ENCODE measurements at regions of chr3 and their contacts with region 1.

Region 1: GRCh38 chr3:5442106-5442785 is 254.7 kb downstream of the EDEM1 start:
- DNase-seq: peak; percentile 30 to 67 (median 50)
- ATAC-seq: peak; percentile 72
- H3K4me3 ChIP-seq: no peak overlapping the region
- H3K27ac ChIP-seq: peak overlapping the region; percentile 72; the same call in 2 of the 3 replicates
- H3K4me1 ChIP-seq: peaks cover 0 to 34% of the 10 kb centered on the region in 2 experiments; a peak in 4 of 5 replicates
- H3K27me3 ChIP-seq: no peaks in the 10 kb centered on the region
- CTCF ChIP-seq: no peak
- EP300 ChIP-seq: peak; percentile 84
- POLR2A ChIP-seq: no peak
- RAD21 ChIP-seq: 0 out of 4 replicates have a peak, but pooled peaks of 1 of the 2 experiments have one; percentile 11

Region 2: GRCh38 chr3:5476403-5476802 is 34.2 kb after region 1 on chr3:
- CTCF ChIA-PET with region 1: no interaction called
- POLR2A ChIA-PET with region 1: no interaction called
- in situ Hi-C with region 1: no loop called
- intact Hi-C with region 1: loop called (anchors 1 kb)
- DNase-seq: peak in 3 of 4 experiments; percentile 16 to 24 (median 21)
- ATAC-seq: peak; percentile 83
- H3K4me3 ChIP-seq: no peak overlapping the region
- H3K27ac ChIP-seq: no peak overlapping the region
- H3K4me1 ChIP-seq: peaks cover 0 to 11% of the 10 kb centered on the region in 2 experiments; a peak in 3 of 5 replicates
- H3K27me3 ChIP-seq: no peaks in the 10 kb centered on the region
- CTCF ChIP-seq: peak; percentile 28 to 44 (median 41); a peak in 5 of 6 replicates
- EP300 ChIP-seq: no peak
- POLR2A ChIP-seq: no peak
- RAD21 ChIP-seq: no peak

Region 3: DNA sequence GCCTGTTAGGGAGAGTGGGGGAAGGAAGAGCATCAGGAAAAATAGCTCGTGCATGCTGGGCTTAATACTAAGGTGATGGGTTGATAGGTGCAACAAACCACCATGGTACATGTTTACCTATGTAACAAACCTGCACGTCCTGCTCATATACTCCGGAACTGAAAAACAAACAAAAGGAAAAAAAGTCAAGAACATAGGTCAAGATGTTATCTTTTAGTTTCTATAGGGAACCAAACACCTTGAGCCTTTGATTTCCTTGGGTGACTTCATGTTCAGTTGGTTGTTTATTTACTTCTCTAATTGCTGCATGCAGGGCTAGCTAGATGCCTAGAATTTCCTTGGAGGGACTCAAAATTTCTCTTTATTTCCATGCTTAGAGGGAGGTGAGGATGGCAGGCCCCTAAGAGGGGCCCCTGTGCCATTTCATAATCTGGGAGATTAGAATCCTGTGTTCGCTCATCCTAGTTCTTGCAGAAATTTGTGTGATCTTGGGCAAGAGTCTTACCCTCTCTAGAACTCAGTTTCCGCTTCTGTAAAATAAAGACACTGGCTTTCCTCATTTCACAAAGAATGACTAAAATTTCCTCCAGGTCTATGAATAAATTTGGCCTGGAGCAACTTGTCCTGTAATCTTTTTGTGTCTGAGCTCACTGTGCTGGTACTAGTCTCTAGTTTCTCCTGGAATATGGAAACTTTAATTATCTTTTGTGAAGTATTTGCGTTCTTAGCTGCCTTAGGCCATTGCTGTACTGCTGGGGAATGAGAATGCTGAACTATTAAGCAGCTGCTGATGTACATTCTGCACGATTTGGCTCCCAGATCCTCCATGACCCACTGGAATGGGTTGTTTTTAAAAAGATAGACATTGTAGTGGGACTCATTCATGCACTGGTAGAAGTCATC is 202.8 kb after region 1 on chr3:
- CTCF ChIA-PET with region 1: no interaction called
- POLR2A ChIA-PET with region 1: no interaction called
- in situ Hi-C with region 1: no loop called
- intact Hi-C with region 1: no loop called
- DNase-seq: no peak
- ATAC-seq: no peak
- H3K4me3 ChIP-seq: no peak overlapping the region
- H3K27ac ChIP-seq: no peak overlapping the region
- H3K4me1 ChIP-seq: no peaks in the 10 kb centered on the region
- H3K27me3 ChIP-seq: no peaks in the 10 kb centered on the region
- CTCF ChIP-seq: no peak
- EP300 ChIP-seq: no peak
- POLR2A ChIP-seq: no peak
- RAD21 ChIP-seq: no peak

Measured in K562 (cell line).